ENCODE measurements at regions of chr4 and their contacts with region 1.

Region 1: GRCh38 chr4:174365018-174365587 is 81.4 kb downstream of the CEP44 start:
- DNase-seq: no peak
- ATAC-seq: peak in 1 of 2 donors; percentile 28
- H3K4me3 ChIP-seq: no peak overlapping the region
- H3K27ac ChIP-seq: no peak overlapping the region
- H3K4me1 ChIP-seq: no peaks in the 10 kb centered on the region
- H3K27me3 ChIP-seq: no peaks in the 10 kb centered on the region
- CTCF ChIP-seq: peak; percentile 58

Region 2: GRCh38 chr4:174037049-174037448 is 328.1 kb before region 1 on chr4:
- intact Hi-C with region 1: no loop called
- DNase-seq: no peak
- ATAC-seq: no peak
- H3K4me3 ChIP-seq: no peak overlapping the region
- H3K27ac ChIP-seq: no peak overlapping the region
- H3K4me1 ChIP-seq: no peaks in the 10 kb centered on the region
- H3K27me3 ChIP-seq: no peaks in the 10 kb centered on the region
- CTCF ChIP-seq: no peak

Region 3: GRCh38 chr4:174058846-174059245 is 306.3 kb before region 1 on chr4:
- intact Hi-C with region 1: no loop called
- DNase-seq: no peak
- ATAC-seq: no peak
- H3K4me3 ChIP-seq: no peak overlapping the region
- H3K27ac ChIP-seq: no peak overlapping the region
- H3K4me1 ChIP-seq: no peaks in the 10 kb centered on the region
- H3K27me3 ChIP-seq: no peaks in the 10 kb centered on the region
- CTCF ChIP-seq: no peak

Region 4: GRCh38 chr4:174437324-174437723 is 72.2 kb after region 1 on chr4:
- intact Hi-C with region 1: no loop called
- DNase-seq: no peak
- ATAC-seq: peak; percentile 53 to 81
- H3K4me3 ChIP-seq: no peak overlapping the region
- H3K27ac ChIP-seq: no peak overlapping the region
- H3K4me1 ChIP-seq: no peaks in the 10 kb centered on the region
- H3K27me3 ChIP-seq: no peaks in the 10 kb centered on the region
- CTCF ChIP-seq: no peak

Region 5: GRCh38 chr4:174604198-174604597 is 239.1 kb after region 1 on chr4:
- intact Hi-C with region 1: no loop called
- DNase-seq: no peak
- ATAC-seq: peak; percentile 94 to 98
- H3K4me3 ChIP-seq: no peak overlapping the region
- H3K27ac ChIP-seq: peak overlapping the region; percentile 27
- H3K4me1 ChIP-seq: no peaks in the 10 kb centered on the region
- H3K27me3 ChIP-seq: no peaks in the 10 kb centered on the region
- CTCF ChIP-seq: no peak

Region 6: DNA sequence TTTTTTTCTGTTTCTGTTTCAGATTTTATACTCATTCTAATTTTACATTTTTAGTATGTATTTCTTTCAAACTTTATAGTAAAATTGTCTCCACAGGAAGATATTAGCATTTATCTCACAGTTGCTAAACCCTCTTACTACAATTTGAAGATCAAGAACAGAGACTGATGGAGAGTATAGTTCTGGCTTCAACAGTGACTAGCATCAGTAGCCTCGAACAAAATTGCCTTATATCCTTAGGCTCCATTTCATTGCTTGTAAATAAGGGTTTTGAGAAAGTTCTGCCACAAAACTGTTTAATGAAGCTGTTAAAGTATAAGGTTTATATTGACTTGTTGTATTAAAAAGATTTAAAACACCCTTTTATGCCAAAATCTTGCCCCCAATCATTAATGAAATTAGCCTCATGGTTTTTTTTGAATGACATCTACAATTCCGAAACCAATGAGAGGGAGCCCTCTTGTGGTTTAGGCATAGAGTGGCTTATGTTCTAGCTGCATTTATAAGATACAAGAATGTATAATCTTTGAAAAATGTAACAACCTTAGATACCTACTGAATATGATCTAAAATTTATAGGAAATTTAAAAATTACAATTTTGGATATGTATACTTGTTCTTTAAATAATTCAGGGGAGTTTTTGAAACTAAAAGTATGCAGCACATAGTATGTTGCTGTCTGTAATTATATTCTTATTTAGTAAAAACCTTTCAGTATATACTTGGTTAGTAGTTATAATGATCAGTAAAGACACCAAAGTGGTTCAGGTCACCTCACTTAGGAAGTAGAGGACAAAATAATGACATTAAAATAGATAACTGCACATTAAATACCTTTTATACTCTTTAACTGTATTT is 267.0 kb after region 1 on chr4:
- intact Hi-C with region 1: loop called (anchors 5 kb)
- DNase-seq: no peak
- ATAC-seq: peak; percentile 61 to 68
- H3K4me3 ChIP-seq: no peak overlapping the region
- H3K27ac ChIP-seq: no peak overlapping the region
- H3K4me1 ChIP-seq: peaks cover 5% of the 10 kb centered on the region
- H3K27me3 ChIP-seq: no peaks in the 10 kb centered on the region
- CTCF ChIP-seq: peak; percentile 79

Region 7: DNA sequence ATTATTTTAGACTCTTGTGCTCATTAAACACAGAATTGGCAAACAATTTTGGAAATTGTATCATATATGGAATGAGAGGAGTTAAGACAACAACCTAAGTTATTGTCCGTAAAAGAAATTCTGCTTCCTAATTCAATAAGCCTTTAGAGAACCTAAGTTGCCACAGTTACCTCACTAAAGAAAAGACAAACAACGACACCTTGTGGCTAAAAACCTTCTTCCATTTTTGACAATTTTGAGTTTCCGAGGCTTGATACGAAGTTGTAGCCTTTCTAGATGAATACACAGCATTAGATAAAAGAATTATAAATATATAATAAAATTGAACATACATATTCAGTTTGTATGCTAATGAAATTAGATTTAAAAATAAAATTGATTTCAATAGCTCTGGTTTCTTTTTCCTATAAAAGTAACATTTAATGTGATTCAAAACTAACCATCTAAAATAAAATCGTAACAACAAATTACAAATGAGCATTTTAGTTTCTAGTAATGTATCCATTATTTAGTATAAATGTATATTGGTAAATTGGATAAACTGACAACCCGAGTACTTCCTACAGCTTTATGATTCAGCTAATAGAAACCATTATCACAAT is 1171.8 kb after region 1 on chr4:
- intact Hi-C with region 1: loop called (anchors 10 kb)
- DNase-seq: no peak
- ATAC-seq: peak in 1 of 2 donors; percentile 33
- H3K4me3 ChIP-seq: no peak overlapping the region
- H3K27ac ChIP-seq: no peak overlapping the region
- H3K4me1 ChIP-seq: no peaks in the 10 kb centered on the region
- H3K27me3 ChIP-seq: no peaks in the 10 kb centered on the region
- CTCF ChIP-seq: peak; percentile 48

Measured in lower lobe of right lung (tissue), 2 donors.